ENCODE measurements at regions of chr10 and their contacts with region 1.

Region 1: GRCh38 chr10:119199231-119199992 is 8.0 kb upstream of the GRK5 start:
- DNase-seq: peak; percentile 62
- ATAC-seq: peak; percentile 96
- H3K4me3 Mint-ChIP-seq: no peak overlapping the region
- H3K27ac Mint-ChIP-seq: no peak overlapping the region
- H3K4me1 Mint-ChIP-seq: peaks cover 9% of the 10 kb centered on the region
- H3K27me3 Mint-ChIP-seq: no peaks in the 10 kb centered on the region; the same call in 1 of the 2 replicates
- CTCF ChIP-seq: 0 out of 2 replicates have a peak, but pooled peaks have one; percentile 19

Region 2: GRCh38 chr10:118911361-118911760 is 288.1 kb before region 1 on chr10:
- CTCF ChIA-PET with region 1: no interaction called
- POLR2A ChIA-PET with region 1: no interaction called
- DNase-seq: no peak
- ATAC-seq: no peak
- H3K4me3 Mint-ChIP-seq: no peak overlapping the region
- H3K27ac Mint-ChIP-seq: no peak overlapping the region
- H3K4me1 Mint-ChIP-seq: peaks cover 4% of the 10 kb centered on the region
- H3K27me3 Mint-ChIP-seq: no peaks in the 10 kb centered on the region
- CTCF ChIP-seq: no peak

Region 3: GRCh38 chr10:119217991-119218490 is 18.6 kb after region 1 on chr10:
- CTCF ChIA-PET with region 1: interaction called, 12 read pairs
- POLR2A ChIA-PET with region 1: no interaction called
- DNase-seq: no peak
- ATAC-seq: peak; percentile 38
- H3K4me3 Mint-ChIP-seq: no peak overlapping the region
- H3K27ac Mint-ChIP-seq: peak overlapping the region; percentile 49; the same call in 1 of the 2 replicates
- H3K4me1 Mint-ChIP-seq: peaks cover 33% of the 10 kb centered on the region
- H3K27me3 Mint-ChIP-seq: no peaks in the 10 kb centered on the region
- CTCF ChIP-seq: no peak

Region 4: GRCh38 chr10:119364645-119365605 is 165.5 kb after region 1 on chr10:
- CTCF ChIA-PET with region 1: interaction called, 10 read pairs
- POLR2A ChIA-PET with region 1: no interaction called
- DNase-seq: no peak
- ATAC-seq: no peak
- H3K4me3 Mint-ChIP-seq: no peak overlapping the region
- H3K27ac Mint-ChIP-seq: no peak overlapping the region
- H3K4me1 Mint-ChIP-seq: no peaks in the 10 kb centered on the region
- H3K27me3 Mint-ChIP-seq: no peaks in the 10 kb centered on the region
- CTCF ChIP-seq: no peak

Region 5: DNA sequence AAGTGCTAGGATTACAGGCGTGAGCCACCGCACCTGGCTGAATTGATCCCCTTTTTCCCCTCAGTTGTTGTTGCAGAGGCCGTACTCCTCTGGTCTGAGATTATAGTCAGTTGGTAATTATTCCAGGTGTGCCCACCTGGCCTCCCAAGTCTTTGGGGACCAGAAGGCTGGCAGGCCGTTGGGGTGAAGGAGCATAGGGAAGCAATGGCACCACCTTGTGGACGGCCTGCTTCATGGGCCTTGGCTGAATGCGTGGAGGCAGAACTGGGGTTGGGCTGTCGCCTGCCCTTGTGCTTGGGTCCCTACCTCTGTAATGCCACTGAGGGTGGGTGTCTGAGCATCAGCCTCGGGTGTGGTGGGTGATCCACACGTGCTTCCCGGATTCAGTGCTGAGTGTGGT is 217.4 kb after region 1 on chr10:
- CTCF ChIA-PET with region 1: interaction called, 86 read pairs
- POLR2A ChIA-PET with region 1: no interaction called
- DNase-seq: peak; percentile 76
- ATAC-seq: peak; percentile 76
- H3K4me3 Mint-ChIP-seq: no peak overlapping the region
- H3K27ac Mint-ChIP-seq: no peak overlapping the region
- H3K4me1 Mint-ChIP-seq: peaks cover 12% of the 10 kb centered on the region
- H3K27me3 Mint-ChIP-seq: no peaks in the 10 kb centered on the region
- CTCF ChIP-seq: peak; percentile 58; the same call in 1 of the 2 replicates

Region 6: GRCh38 chr10:119439922-119440321 is 240.5 kb after region 1 on chr10:
- CTCF ChIA-PET with region 1: interaction called, 95 read pairs
- POLR2A ChIA-PET with region 1: no interaction called
- DNase-seq: no peak
- ATAC-seq: no peak
- H3K4me3 Mint-ChIP-seq: no peak overlapping the region
- H3K27ac Mint-ChIP-seq: no peak overlapping the region
- H3K4me1 Mint-ChIP-seq: no peaks in the 10 kb centered on the region
- H3K27me3 Mint-ChIP-seq: peaks cover 6% of the 10 kb centered on the region
- CTCF ChIP-seq: no peak

Region 7: DNA sequence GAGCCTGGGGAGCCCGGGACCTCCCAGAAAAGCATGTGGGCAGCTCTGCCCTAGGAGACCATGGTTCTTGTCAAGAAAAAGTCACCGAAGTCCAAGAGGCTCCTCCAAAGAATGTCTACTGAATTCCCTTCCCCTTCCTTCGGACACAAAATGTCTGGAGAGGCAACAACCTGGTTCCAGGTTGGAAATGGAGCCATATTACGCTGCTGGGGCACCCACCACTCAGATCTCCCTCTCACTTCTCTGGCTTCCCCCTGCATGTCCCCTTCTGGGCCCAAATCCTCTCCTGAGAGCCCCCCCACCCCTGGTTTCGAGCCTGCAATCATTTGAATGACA is 290.5 kb after region 1 on chr10:
- CTCF ChIA-PET with region 1: interaction called, 71 read pairs
- POLR2A ChIA-PET with region 1: no interaction called
- DNase-seq: no peak
- ATAC-seq: no peak
- H3K4me3 Mint-ChIP-seq: no peak overlapping the region
- H3K27ac Mint-ChIP-seq: no peak overlapping the region
- H3K4me1 Mint-ChIP-seq: no peaks in the 10 kb centered on the region
- H3K27me3 Mint-ChIP-seq: no peaks in the 10 kb centered on the region; the same call in 1 of the 2 replicates
- CTCF ChIP-seq: no peak